ENCODE measurements at regions of chr12 and their contacts with region 1.

Region 1: GRCh38 chr12:71746983-71747611 is 7.6 kb upstream of the RAB21 start:
- DNase-seq: peak; percentile 30 to 60
- H3K4me3 ChIP-seq: no peak overlapping the region
- H3K27ac ChIP-seq: no peak overlapping the region
- H3K4me1 ChIP-seq: no peaks in the 10 kb centered on the region
- H3K27me3 ChIP-seq: peaks cover 8% of the 10 kb centered on the region; the same call in 1 of the 2 replicates
- CTCF ChIP-seq: peak; percentile 91

Region 2: DNA sequence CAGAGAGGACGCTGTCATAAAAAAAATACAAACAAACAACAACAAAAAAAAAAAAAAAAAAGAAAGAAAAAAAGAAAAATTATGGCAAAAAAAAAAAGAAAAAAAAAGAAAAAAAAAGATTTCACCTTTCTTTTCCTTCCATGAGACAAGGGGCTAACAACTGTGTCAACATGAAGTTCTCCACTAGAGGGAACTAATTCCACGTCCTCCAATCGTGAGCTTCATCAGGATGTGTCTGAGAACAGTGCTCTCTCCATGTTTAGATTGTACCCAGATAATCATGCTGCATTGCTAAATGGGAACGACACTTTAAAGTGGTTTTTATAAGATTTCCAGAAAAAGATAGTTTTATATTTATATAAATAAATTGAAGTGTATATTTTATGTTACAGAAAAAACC is 1013.7 kb before region 1 on chr12:
- CTCF ChIA-PET with region 1: no interaction called
- POLR2A ChIA-PET with region 1: no interaction called
- intact Hi-C with region 1: loop called (anchors 2 kb)
- DNase-seq: peak; percentile 30 to 43
- H3K4me3 ChIP-seq: no peak overlapping the region
- H3K27ac ChIP-seq: no peak overlapping the region
- H3K4me1 ChIP-seq: no peaks in the 10 kb centered on the region
- H3K27me3 ChIP-seq: no peaks in the 10 kb centered on the region
- CTCF ChIP-seq: peak; percentile 85

Region 3: GRCh38 chr12:71400481-71400880 is 346.6 kb before region 1 on chr12:
- CTCF ChIA-PET with region 1: no interaction called
- POLR2A ChIA-PET with region 1: no interaction called
- intact Hi-C with region 1: loop called (anchors 5 kb)
- DNase-seq: no peak
- H3K4me3 ChIP-seq: no peak overlapping the region
- H3K27ac ChIP-seq: no peak overlapping the region
- H3K4me1 ChIP-seq: no peaks in the 10 kb centered on the region
- H3K27me3 ChIP-seq: no peaks in the 10 kb centered on the region
- CTCF ChIP-seq: no peak

Region 4: GRCh38 chr12:71484272-71484905 is 262.7 kb before region 1 on chr12:
- CTCF ChIA-PET with region 1: no interaction called
- POLR2A ChIA-PET with region 1: no interaction called
- intact Hi-C with region 1: loop called (anchors 5 kb)
- DNase-seq: no peak
- H3K4me3 ChIP-seq: no peak overlapping the region; the same call in 1 of the 2 replicates
- H3K27ac ChIP-seq: no peak overlapping the region
- H3K4me1 ChIP-seq: no peaks in the 10 kb centered on the region
- H3K27me3 ChIP-seq: no peaks in the 10 kb centered on the region
- CTCF ChIP-seq: no peak

Region 5: GRCh38 chr12:71663561-71664294 is 83.4 kb before region 1 on chr12 and contains the start of gene ZFC3H1:
- CTCF ChIA-PET with region 1: interaction called, 5 read pairs
- POLR2A ChIA-PET with region 1: no interaction called
- intact Hi-C with region 1: loop called (anchors 2 kb)
- DNase-seq: peak; percentile 87 to 98
- H3K4me3 ChIP-seq: peak within 1 kb of the TSS; percentile 70
- H3K27ac ChIP-seq: peak within 1 kb of the TSS; percentile 94
- H3K4me1 ChIP-seq: peaks cover 16% of the 10 kb centered on the region
- H3K27me3 ChIP-seq: no peaks in the 10 kb centered on the region
- CTCF ChIP-seq: no peak; the same call in 1 of the 2 replicates
- total RNA-seq, gene ZFC3H1: 47.4 and 53.4 TPM in 2 replicates

Region 6: GRCh38 chr12:71772735-71773134 is 25.6 kb after region 1 on chr12:
- CTCF ChIA-PET with region 1: no interaction called
- POLR2A ChIA-PET with region 1: no interaction called
- intact Hi-C with region 1: no loop called
- DNase-seq: no peak
- H3K4me3 ChIP-seq: no peak overlapping the region
- H3K27ac ChIP-seq: no peak overlapping the region
- H3K4me1 ChIP-seq: no peaks in the 10 kb centered on the region
- H3K27me3 ChIP-seq: no peaks in the 10 kb centered on the region
- CTCF ChIP-seq: no peak

Measured in PC-9 (cell line).